Activated CD4-positive, alpha-beta memory T cell treated with anti-CD3 and anti-CD28 coated beads for 36 hours (primary cell): ENCODE measurements at regions of chr9 and their contacts with region 1.

Region 1: GRCh38 chr9:37753489-37754190 is at the start of gene TRMT10B:
- DNase-seq: peak; percentile 83
- H3K4me3 Mint-ChIP-seq: peak within 1 kb of the TSS; percentile 96
- H3K27ac Mint-ChIP-seq: peak within 1 kb of the TSS; percentile 88
- H3K4me1 Mint-ChIP-seq: peaks cover 23% of the 10 kb centered on the region
- H3K27me3 Mint-ChIP-seq: no peaks in the 10 kb centered on the region
- total RNA-seq, gene TRMT10B: 8.7 to 11.5 TPM

Region 2: DNA sequence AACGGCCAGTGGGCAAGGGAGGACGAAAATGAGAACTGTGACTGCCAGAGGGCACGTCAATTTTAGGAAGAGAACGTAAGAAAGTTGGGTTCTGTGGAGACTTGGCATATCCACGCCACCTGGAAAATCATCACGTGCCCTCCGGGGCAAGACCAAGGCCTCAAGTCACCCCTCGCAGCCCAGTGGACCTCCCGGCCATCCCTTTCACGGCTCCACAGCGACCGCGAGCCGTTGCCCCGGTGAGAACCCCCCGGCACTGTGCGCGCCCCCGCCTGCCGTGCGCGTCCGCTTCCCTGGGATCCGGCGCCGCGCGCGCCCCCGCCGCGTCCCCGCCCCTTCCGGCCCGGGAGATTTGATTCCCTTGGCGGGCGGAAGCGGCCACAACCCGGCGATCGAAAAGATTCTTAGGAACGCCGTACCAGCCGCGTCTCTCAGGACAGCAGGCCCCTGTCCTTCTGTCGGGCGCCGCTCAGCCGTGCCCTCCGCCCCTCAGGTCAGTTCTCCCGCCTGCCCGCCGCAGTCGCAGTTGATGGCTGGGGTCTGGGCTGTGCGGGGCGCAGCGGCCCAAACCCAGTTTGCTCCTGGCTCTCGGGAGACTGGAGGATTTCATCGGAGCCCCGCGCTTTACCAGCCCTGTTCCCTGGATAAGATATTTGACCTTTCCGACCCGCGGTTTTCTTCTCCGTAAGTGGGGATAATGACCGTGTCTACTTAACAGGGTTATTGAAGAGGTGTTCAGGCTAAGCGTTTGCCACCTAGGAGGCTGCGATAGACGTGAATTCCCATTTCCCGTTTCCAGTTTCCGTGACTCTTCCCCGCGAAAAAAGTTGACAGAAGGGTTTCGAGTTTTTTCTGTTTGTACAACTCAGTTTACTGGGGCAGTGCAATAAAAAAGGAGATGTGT is 1180.9 kb before region 1 on chr9 and contains the start of gene MELK:
- CTCF ChIA-PET with region 1: no interaction called
- POLR2A ChIA-PET with region 1: no interaction called
- intact Hi-C with region 1: loop called (anchors 10 kb)
- DNase-seq: peak; percentile 90
- H3K4me3 Mint-ChIP-seq: peak within 1 kb of the TSS; percentile 92
- H3K27ac Mint-ChIP-seq: peak within 1 kb of the TSS; percentile 80
- H3K4me1 Mint-ChIP-seq: peaks cover 30% of the 10 kb centered on the region
- H3K27me3 Mint-ChIP-seq: no peaks in the 10 kb centered on the region
- total RNA-seq, gene MELK: 68.4 to 69.6 TPM

Region 3: GRCh38 chr9:37485389-37486219 is 268.0 kb before region 1 on chr9 and contains the start of gene POLR1E:
- CTCF ChIA-PET with region 1: no interaction called
- POLR2A ChIA-PET with region 1: no interaction called
- intact Hi-C with region 1: loop called (anchors 10 kb)
- DNase-seq: peak; percentile 97
- H3K4me3 Mint-ChIP-seq: peak within 1 kb of the TSS; percentile 88
- H3K27ac Mint-ChIP-seq: peak within 1 kb of the TSS; percentile 91
- H3K4me1 Mint-ChIP-seq: peaks cover 35% of the 10 kb centered on the region
- H3K27me3 Mint-ChIP-seq: peaks cover 6% of the 10 kb centered on the region
- total RNA-seq, gene POLR1E: 56.7 to 58.0 TPM

Region 4: DNA sequence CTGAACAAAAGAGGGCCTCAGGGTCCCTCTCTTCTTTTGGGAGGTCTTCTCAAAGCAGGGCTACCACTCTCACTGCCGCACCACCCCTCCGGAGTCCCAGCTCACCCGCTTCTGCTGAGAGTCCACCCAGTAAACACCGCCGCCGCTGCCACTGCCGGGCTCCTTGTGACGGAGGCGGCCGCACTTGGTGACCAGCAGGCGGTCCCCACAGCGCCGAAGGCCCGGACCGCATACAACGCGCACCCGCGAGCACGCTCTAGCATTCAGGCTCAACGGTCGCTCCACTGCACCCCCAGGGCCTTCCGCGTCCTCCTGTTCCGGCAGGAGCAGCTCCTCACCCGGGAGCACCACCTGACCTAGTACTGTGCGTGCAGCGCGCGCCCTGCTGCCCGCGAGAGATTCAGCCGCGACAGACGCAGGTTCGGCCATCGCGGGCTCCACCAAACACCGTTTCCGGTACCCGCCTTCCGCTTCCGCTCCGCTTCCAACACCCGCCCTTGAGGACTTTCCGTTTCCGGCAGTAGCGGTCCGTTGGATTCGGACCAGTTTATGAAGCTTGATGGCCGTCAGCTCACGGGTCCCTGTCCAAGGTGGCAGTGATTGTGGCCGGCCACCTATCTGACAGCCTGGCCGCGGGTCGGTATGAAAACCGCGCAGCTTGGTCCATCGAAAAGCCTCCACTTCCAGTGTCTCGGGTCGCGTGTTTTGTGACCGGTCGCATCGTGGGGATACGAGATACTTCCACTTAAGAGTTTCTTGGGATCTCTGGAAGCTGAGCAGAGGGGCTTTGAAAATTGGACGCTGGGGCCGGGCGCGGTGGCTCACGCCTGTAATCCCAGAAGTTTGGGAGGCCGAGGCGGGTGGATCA is 31.2 kb after region 1 on chr9 and contains the start of gene EXOSC3:
- CTCF ChIA-PET with region 1: no interaction called
- POLR2A ChIA-PET with region 1: interaction called, 4 read pairs
- intact Hi-C with region 1: loop called (anchors 1 kb)
- DNase-seq: peak; percentile 93
- H3K4me3 Mint-ChIP-seq: peak within 1 kb of the TSS; percentile 98
- H3K27ac Mint-ChIP-seq: peak within 1 kb of the TSS; percentile 93
- H3K4me1 Mint-ChIP-seq: peaks cover 38% of the 10 kb centered on the region
- H3K27me3 Mint-ChIP-seq: no peaks in the 10 kb centered on the region
- total RNA-seq, gene EXOSC3: 97.5 to 97.9 TPM

Region 5: DNA sequence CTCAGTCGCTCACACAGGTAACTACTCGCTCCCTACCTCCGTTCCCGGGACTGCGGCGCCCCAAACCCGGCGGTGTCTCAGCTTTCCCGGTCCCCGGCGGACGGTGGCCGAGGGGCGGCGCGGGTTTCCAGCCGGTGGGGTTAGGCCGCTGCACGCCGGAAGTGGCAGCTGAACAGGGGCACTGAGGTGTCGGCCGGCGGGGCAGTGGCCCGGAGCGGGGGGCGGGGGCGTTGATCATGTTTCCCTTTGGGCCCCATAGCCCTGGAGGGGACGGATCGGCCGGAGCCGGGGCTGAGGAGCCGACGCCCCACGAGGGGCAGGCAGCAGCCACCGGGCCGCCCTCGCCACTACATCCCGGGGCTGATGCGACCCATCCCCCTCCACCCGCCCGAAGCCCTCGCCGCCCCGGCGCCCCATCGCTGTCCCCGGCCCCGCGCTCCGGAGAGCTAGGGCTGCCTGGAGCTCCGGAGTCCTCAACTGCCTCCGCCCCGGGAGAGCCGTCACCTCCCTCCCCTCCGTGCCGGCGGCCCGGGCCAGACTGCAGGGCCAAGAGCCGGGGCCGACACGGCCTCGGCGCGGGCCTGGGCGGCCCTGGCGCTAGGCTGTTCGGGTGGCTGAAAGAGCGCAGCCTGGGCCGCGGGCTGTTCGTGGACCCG is 47.1 kb after region 1 on chr9 and contains the start of gene DCAF10:
- CTCF ChIA-PET with region 1: no interaction called
- POLR2A ChIA-PET with region 1: no interaction called
- intact Hi-C with region 1: loop called (anchors 1 kb)
- DNase-seq: peak; percentile 92
- H3K4me3 Mint-ChIP-seq: peak within 1 kb of the TSS; percentile 93
- H3K27ac Mint-ChIP-seq: peak within 1 kb of the TSS; percentile 85
- H3K4me1 Mint-ChIP-seq: peaks cover 40% of the 10 kb centered on the region
- H3K27me3 Mint-ChIP-seq: no peaks in the 10 kb centered on the region
- total RNA-seq, gene DCAF10: 13.8 to 17.2 TPM

Region 6: DNA sequence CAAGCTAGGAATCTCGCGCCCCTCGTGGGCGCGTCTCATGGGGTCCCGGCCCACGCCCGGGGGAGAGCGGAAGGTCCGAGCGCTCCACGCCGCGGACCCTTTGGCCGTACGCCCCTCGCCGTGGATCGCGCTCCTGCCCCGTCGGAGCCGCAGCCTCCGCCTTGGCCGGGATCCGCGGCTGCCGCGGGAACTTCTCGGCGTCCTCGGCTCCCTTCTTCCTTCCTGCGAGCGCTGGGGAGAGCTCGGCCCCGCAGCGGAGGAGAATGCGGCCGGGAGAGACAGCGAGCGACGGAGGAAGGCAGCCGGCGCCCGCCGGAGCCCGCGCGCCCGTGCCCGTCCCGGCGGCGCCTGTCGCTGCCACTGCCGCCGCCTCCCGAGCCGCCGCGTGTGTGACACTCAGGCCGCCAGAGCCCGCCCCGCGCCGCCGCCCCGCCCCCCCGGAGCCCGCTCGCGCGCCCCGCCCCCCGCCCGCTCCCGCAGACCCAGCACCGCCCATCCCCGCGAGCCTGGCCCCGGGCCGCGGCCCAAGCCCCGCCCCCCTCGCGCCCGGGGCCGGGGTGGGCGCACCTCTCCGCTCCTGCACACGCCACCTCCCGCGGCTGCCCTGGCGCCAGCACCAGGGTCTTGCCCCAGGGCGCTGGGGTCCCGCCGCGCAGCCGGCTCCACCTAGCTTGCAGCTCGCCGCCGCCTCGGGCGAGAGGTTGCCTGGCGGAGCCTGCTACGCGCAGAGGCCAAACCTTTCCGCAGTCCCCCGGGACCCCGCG is 315.4 kb after region 1 on chr9 and contains the start of gene SHB:
- CTCF ChIA-PET with region 1: no interaction called
- POLR2A ChIA-PET with region 1: no interaction called
- intact Hi-C with region 1: loop called (anchors 10 kb)
- DNase-seq: peak; percentile 85
- H3K4me3 Mint-ChIP-seq: peak within 1 kb of the TSS; percentile 68
- H3K27ac Mint-ChIP-seq: no peak within 1 kb of the TSS
- H3K4me1 Mint-ChIP-seq: peaks cover 19% of the 10 kb centered on the region
- H3K27me3 Mint-ChIP-seq: peaks cover 6% of the 10 kb centered on the region
- total RNA-seq, gene SHB: 1.1 to 1.2 TPM